HCT116 (cell line): ENCODE measurements at regions of chr5 and their contacts with region 1.

Region 1: DNA sequence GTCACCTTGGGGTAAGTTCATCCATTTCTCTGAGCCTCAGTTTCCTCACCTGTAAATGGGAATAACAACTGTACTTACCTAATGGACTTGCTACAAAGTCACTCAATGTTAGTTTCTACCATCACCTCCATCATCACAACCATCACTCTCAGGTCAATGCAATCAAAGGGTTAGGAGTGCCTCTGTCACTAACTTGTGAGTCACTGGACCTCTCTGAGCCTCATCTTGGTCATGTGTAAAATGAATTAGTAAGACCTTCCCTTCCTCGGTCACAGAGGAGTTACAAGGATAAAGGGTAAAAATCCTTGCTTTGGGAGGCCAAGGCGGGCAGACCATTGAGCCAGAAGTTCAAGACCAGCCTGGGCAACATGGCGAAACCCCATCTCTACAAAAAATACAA is 12.8 kb downstream of the FABP6 start:
- DNase-seq: no peak
- ATAC-seq: no peak
- H3K4me3 ChIP-seq: no peak overlapping the region
- H3K27ac ChIP-seq: no peak overlapping the region
- H3K4me1 ChIP-seq: no peaks in the 10 kb centered on the region; a peak in 1 of 4 replicates
- H3K27me3 ChIP-seq: no peaks in the 10 kb centered on the region
- CTCF ChIP-seq: no peak
- POLR2A ChIP-seq: no peak
- RAD21 ChIP-seq: no peak

Region 2: DNA sequence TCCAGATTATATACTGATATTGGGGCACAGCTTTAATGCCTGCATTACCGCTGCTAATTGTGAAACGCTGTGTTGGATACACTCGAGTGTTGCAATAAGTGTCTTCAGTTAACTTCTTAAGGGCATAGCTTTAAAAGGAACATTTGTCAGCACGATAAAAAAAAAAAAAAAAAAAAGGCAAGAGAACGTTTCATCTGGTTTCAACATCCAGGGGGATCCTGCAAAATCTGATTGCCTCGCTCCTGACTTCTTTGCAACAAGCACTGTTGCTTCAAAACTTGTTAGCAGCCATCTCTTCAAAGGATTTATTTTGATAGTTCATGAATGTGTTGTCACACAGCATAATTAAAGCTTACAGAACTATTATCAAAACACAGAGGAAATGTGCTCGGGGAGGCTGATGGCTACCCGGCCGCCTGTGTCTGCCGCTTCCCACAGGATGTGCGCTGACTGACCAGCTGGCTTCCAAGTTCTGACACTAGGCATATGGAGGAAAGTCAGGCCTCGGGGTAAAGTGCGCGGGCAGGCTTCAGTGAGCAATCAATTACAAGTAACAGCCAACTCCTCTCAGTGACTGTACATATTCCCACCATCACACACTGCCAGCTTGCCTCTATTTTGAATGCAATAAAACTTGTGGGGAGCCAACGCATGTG is 1220.1 kb before region 1 on chr5:
- CTCF ChIA-PET with region 1: no interaction called
- POLR2A ChIA-PET with region 1: no interaction called
- RAD21 ChIA-PET with region 1: no interaction called
- intact Hi-C with region 1: no loop called
- DNase-seq: no peak
- ATAC-seq: no peak
- H3K4me3 ChIP-seq: no peak overlapping the region
- H3K27ac ChIP-seq: no peak overlapping the region
- H3K4me1 ChIP-seq: no peaks in the 10 kb centered on the region
- H3K27me3 ChIP-seq: peaks cover 46% of the 10 kb centered on the region
- CTCF ChIP-seq: no peak
- POLR2A ChIP-seq: no peak
- RAD21 ChIP-seq: no peak

Region 3: DNA sequence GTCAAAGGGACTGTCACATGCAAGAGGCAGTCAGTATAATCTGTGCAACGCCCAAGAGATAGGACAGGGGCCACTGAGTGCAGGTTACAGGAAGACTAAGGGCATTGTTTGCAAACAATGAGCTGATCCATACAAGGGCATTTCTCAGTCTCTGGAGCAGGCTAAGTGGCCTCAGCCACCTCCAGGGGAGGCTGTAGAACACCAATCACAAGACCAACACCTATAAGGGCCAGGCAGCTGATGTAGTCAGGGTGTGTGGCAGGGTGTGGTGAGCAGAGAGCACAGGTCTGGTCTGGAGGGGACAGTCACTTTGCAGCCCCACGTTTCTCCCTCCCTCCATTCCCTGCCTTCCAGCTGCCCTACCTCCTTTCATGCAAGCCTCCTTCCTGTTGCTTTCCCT is 409.1 kb before region 1 on chr5:
- CTCF ChIA-PET with region 1: no interaction called
- POLR2A ChIA-PET with region 1: no interaction called
- RAD21 ChIA-PET with region 1: no interaction called
- intact Hi-C with region 1: no loop called
- DNase-seq: no peak
- ATAC-seq: peak; percentile 87
- H3K4me3 ChIP-seq: no peak overlapping the region
- H3K27ac ChIP-seq: no peak overlapping the region
- H3K4me1 ChIP-seq: no peaks in the 10 kb centered on the region
- H3K27me3 ChIP-seq: no peaks in the 10 kb centered on the region
- CTCF ChIP-seq: no peak; a peak in 2 of 6 replicates
- POLR2A ChIP-seq: no peak
- RAD21 ChIP-seq: peak; percentile 55

Region 4: GRCh38 chr5:160342403-160342941 is 100.3 kb after region 1 on chr5:
- CTCF ChIA-PET with region 1: interaction called, 5 read pairs
- POLR2A ChIA-PET with region 1: no interaction called
- RAD21 ChIA-PET with region 1: no interaction called
- intact Hi-C with region 1: loop called (anchors 2 kb)
- DNase-seq: no peak
- ATAC-seq: no peak
- H3K4me3 ChIP-seq: no peak overlapping the region
- H3K27ac ChIP-seq: no peak overlapping the region
- H3K4me1 ChIP-seq: peaks cover 0 to 7% of the 10 kb centered on the region in 2 experiments; a peak in 2 of 4 replicates
- H3K27me3 ChIP-seq: no peaks in the 10 kb centered on the region
- CTCF ChIP-seq: no peak
- POLR2A ChIP-seq: no peak
- RAD21 ChIP-seq: no peak